Cardiac septum (tissue), 1 donor: ENCODE measurements at regions of chr5 and their contacts with region 1.

Region 1: GRCh38 chr5:33439905-33440481 is 772 bp upstream of the TARS1 start:
- DNase-seq: no peak

Region 2: GRCh38 chr5:33969572-33970452 is 529.8 kb after region 1 on chr5:
- intact Hi-C with region 1: loop called (anchors 5 kb)
- DNase-seq: no peak